CD4-positive, alpha-beta memory T cell (primary cell): ENCODE measurements at regions of chr9 and their contacts with region 1.

Region 1: GRCh38 chr9:114930056-114930812 is at the start of gene TNFSF8:
- DNase-seq: peak; percentile 76 to 90 (median 80)
- H3K4me3 ChIP-seq: peak within 1 kb of the TSS; percentile 67 to 97
- H3K4me3 Mint-ChIP-seq: peak within 1 kb of the TSS; percentile 95 to 100 (median 98)
- H3K27ac ChIP-seq: peak within 1 kb of the TSS; percentile 75
- H3K27ac Mint-ChIP-seq: peak within 1 kb of the TSS; percentile 95 to 99 (median 98)
- H3K4me1 ChIP-seq: peaks cover 38% of the 10 kb centered on the region
- H3K4me1 Mint-ChIP-seq: peaks cover 31 to 66% (median 44%) of the 10 kb centered on the region in 4 donors
- H3K27me3 ChIP-seq: no peaks in the 10 kb centered on the region
- H3K27me3 Mint-ChIP-seq: no peaks in the 10 kb centered on the region
- total RNA-seq, gene TNFSF8: 43.2 to 44.2 TPM

Region 2: DNA sequence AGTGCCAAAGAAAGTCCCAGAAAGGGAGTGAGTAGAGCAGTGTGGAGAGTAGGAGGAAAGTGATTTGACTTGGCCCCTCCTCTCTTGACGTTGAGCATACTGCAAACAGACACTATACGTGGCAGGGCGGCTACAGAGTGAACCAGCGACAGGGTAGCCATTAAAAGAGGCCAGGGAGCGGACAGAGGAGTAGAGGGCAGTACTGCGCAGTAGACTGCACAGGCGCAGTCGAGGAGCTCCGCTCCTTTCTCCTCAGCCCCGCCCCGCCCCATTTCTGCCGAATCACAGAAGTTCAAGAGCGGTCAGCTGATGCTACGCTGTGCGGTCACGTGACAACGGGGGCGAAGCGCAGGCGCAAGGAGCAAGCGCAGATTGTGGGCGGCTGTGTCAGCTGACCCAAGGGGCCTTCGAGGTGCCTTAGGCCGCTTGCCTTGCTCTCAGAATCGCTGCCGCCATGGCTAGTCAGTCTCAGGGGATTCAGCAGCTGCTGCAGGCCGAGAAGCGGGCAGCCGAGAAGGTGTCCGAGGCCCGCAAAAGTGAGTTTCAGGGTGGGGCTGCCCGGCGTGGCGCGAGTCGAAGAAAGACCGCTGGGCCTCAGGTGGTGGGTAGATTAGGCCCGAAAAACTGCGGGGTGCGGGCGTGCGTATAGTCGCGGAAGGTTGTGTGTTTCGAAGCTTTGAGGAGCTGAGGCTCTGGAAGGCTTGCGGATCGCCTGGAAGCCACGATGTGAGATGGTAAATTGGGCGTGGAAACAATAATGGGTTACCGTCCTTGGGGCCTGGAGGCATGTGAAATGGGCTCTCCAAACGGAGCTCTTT is 342.6 kb before region 1 on chr9 and contains the start of gene ATP6V1G1:
- CTCF ChIA-PET with region 1: no interaction called
- POLR2A ChIA-PET with region 1: interaction called, 5 read pairs
- intact Hi-C with region 1: loop called (anchors 10 kb)
- DNase-seq: peak; percentile 95 to 99 (median 97)
- H3K4me3 ChIP-seq: peak within 1 kb of the TSS; percentile 47 to 82
- H3K4me3 Mint-ChIP-seq: peak within 1 kb of the TSS; percentile 96 to 99 (median 99)
- H3K27ac ChIP-seq: peak within 1 kb of the TSS; percentile 93
- H3K27ac Mint-ChIP-seq: peak within 1 kb of the TSS; percentile 98 to 100 (median 99)
- H3K4me1 ChIP-seq: peaks cover 47% of the 10 kb centered on the region
- H3K4me1 Mint-ChIP-seq: peaks cover 35 to 56% (median 45%) of the 10 kb centered on the region in 4 donors
- H3K27me3 ChIP-seq: no peaks in the 10 kb centered on the region
- H3K27me3 Mint-ChIP-seq: no peaks in the 10 kb centered on the region
- total RNA-seq, gene ATP6V1G1: 121 TPM

Region 3: GRCh38 chr9:114691046-114691955 is 238.9 kb before region 1 on chr9:
- CTCF ChIA-PET with region 1: no interaction called
- POLR2A ChIA-PET with region 1: interaction called, 14 read pairs
- intact Hi-C with region 1: no loop called
- DNase-seq: peak; percentile 64 to 86 (median 75)
- H3K4me3 ChIP-seq: peak overlapping the region; percentile 4 to 46
- H3K4me3 Mint-ChIP-seq: peak overlapping the region; percentile 40 to 77 (median 72)
- H3K27ac ChIP-seq: peak overlapping the region; percentile 54
- H3K27ac Mint-ChIP-seq: peak overlapping the region; percentile 65 to 96 (median 93)
- H3K4me1 ChIP-seq: peaks cover 41% of the 10 kb centered on the region
- H3K4me1 Mint-ChIP-seq: peaks cover 28 to 45% (median 31%) of the 10 kb centered on the region in 4 donors
- H3K27me3 ChIP-seq: no peaks in the 10 kb centered on the region
- H3K27me3 Mint-ChIP-seq: no peaks in the 10 kb centered on the region

Region 4: DNA sequence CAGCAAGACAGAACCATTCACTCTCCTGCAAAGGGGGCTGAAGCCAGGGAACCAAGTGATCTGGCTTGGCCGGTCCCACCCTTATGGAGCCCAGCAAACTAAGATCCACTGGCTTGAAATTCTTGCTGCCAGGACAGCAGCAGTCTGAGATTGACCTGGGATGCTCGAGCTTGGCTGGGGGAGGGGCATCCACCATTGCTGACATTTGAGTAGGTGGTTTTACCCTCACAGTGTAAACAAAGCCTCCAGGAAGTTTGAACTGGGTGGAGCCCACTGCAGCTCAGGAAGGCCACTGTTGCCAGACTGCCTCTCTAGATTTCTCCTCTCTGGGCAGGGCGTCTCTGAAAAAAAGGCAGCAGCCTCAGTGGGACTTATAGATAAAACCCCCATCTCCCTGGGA is 60.4 kb before region 1 on chr9:
- CTCF ChIA-PET with region 1: no interaction called
- POLR2A ChIA-PET with region 1: interaction called, 23 read pairs
- intact Hi-C with region 1: no loop called
- DNase-seq: peak in 4 of 5 donors; percentile 8 to 29 (median 22)
- H3K4me3 ChIP-seq: peak overlapping the region in 1 of 2 donors; percentile 9
- H3K4me3 Mint-ChIP-seq: peak overlapping the region in 7 of 8 donors; percentile 54 to 73 (median 65)
- H3K27ac ChIP-seq: no peak overlapping the region
- H3K27ac Mint-ChIP-seq: peak overlapping the region; percentile 7 to 87 (median 62)
- H3K4me1 ChIP-seq: peaks cover 20% of the 10 kb centered on the region
- H3K4me1 Mint-ChIP-seq: peaks cover 19 to 29% (median 24%) of the 10 kb centered on the region in 4 donors
- H3K27me3 ChIP-seq: no peaks in the 10 kb centered on the region
- H3K27me3 Mint-ChIP-seq: no peaks in the 10 kb centered on the region

Region 5: DNA sequence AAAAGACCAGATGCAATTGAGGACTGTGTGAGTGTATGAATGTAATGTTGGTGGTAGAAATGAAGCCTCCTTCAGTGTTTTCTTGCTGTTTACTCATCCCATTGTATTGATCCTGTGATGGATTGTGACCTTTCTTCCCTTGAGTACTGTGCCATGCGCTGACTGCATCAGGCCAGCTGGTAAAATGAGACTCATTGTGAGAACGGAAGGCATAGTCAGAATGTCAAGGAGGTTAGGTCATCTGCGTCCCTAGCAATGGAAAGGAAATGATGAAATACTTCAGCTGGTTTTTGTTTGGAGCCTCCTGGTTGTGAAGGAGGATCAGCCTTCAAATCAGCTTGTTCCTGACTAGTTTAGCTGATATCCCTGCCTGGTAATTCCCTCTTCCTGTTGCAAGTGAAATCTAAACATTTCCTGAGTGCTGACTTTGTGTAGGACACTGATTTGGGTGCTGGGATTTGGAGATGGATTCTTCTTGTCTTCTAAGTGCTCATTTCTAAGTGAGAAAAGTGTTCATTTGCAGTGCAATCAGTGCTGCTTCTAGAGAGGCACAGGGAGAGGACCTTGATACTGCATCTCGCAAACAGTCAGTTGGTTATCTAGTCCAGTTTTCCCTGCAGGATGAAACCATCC is 35.3 kb before region 1 on chr9:
- CTCF ChIA-PET with region 1: interaction called, 10 read pairs
- POLR2A ChIA-PET with region 1: interaction called, 95 read pairs
- intact Hi-C with region 1: loop called (anchors 1 kb)
- DNase-seq: no peak
- H3K4me3 ChIP-seq: no peak overlapping the region
- H3K4me3 Mint-ChIP-seq: peak overlapping the region in 6 of 8 donors; percentile 15 to 81 (median 67)
- H3K27ac ChIP-seq: no peak overlapping the region
- H3K27ac Mint-ChIP-seq: peak overlapping the region in 6 of 7 donors; percentile 43 to 92 (median 81)
- H3K4me1 ChIP-seq: peaks cover 79% of the 10 kb centered on the region
- H3K4me1 Mint-ChIP-seq: peaks cover 17 to 54% (median 42%) of the 10 kb centered on the region in 4 donors
- H3K27me3 ChIP-seq: no peaks in the 10 kb centered on the region
- H3K27me3 Mint-ChIP-seq: no peaks in the 10 kb centered on the region

Region 6: GRCh38 chr9:114919611-114920010 is 10.6 kb before region 1 on chr9:
- CTCF ChIA-PET with region 1: interaction called, 20 read pairs
- POLR2A ChIA-PET with region 1: interaction called, 150 read pairs
- intact Hi-C with region 1: loop called (anchors 1 kb)
- DNase-seq: no peak
- H3K4me3 ChIP-seq: no peak overlapping the region
- H3K4me3 Mint-ChIP-seq: peak overlapping the region in 7 of 8 donors; percentile 57 to 68 (median 67)
- H3K27ac ChIP-seq: no peak overlapping the region
- H3K27ac Mint-ChIP-seq: peak overlapping the region; percentile 72 to 89 (median 88)
- H3K4me1 ChIP-seq: peaks cover 86% of the 10 kb centered on the region
- H3K4me1 Mint-ChIP-seq: peaks cover 73 to 99% (median 87%) of the 10 kb centered on the region in 4 donors
- H3K27me3 ChIP-seq: no peaks in the 10 kb centered on the region
- H3K27me3 Mint-ChIP-seq: no peaks in the 10 kb centered on the region

Region 7: GRCh38 chr9:115013998-115014397 is 83.8 kb after region 1 on chr9:
- CTCF ChIA-PET with region 1: interaction called, 7 read pairs
- POLR2A ChIA-PET with region 1: interaction called, 3 read pairs
- intact Hi-C with region 1: loop called (anchors 5 kb)
- DNase-seq: peak; percentile 78 to 79 (median 79)
- H3K4me3 ChIP-seq: no peak overlapping the region
- H3K4me3 Mint-ChIP-seq: no peak overlapping the region
- H3K27ac ChIP-seq: no peak overlapping the region
- H3K27ac Mint-ChIP-seq: peak overlapping the region in 1 of 7 donors; percentile 69
- H3K4me1 ChIP-seq: peaks cover 12% of the 10 kb centered on the region
- H3K4me1 Mint-ChIP-seq: peaks cover 19 to 21% (median 20%) of the 10 kb centered on the region in 4 donors
- H3K27me3 ChIP-seq: no peaks in the 10 kb centered on the region
- H3K27me3 Mint-ChIP-seq: peaks cover 0 to 1% of the 10 kb centered on the region in 2 donors